ENCODE measurements at regions of chr11 and their contacts with region 1.

Region 1: GRCh38 chr11:65251476-65251875 is 10.3 kb upstream of the POLA2 start:
- H3K4me3 ChIP-seq: no peak overlapping the region
- H3K27ac ChIP-seq: no peak overlapping the region
- H3K4me1 ChIP-seq: no peaks in the 10 kb centered on the region
- CTCF ChIP-seq: no peak

Region 2: GRCh38 chr11:65219930-65220213 is 31.6 kb before region 1 on chr11:
- CTCF ChIA-PET with region 1: interaction called, 10 read pairs
- POLR2A ChIA-PET with region 1: no interaction called
- H3K4me3 ChIP-seq: no peak overlapping the region
- H3K27ac ChIP-seq: no peak overlapping the region
- H3K4me1 ChIP-seq: no peaks in the 10 kb centered on the region; the same call in 1 of the 2 replicates
- CTCF ChIP-seq: no peak

Region 3: GRCh38 chr11:65227879-65228278 is 23.6 kb before region 1 on chr11:
- CTCF ChIA-PET with region 1: interaction called, 13 read pairs
- POLR2A ChIA-PET with region 1: interaction called, 3 read pairs
- H3K4me3 ChIP-seq: no peak overlapping the region
- H3K27ac ChIP-seq: no peak overlapping the region
- H3K4me1 ChIP-seq: no peaks in the 10 kb centered on the region
- CTCF ChIP-seq: no peak

Measured in HEK293 (cell line).